Activated naive CD4-positive, alpha-beta T cell treated with anti-CD3 and anti-CD28 coated beads, Interleukin-2, amount 10 ng/mL, durations not matched to agents 7 days and 5 days (primary cell): ENCODE measurements at regions of chr10 and their contacts with region 1.

Region 1: GRCh38 chr10:11724938-11725776 is 17.0 kb upstream of the ECHDC3 start:
- DNase-seq: no peak
- H3K4me3 Mint-ChIP-seq: no peak overlapping the region
- H3K27ac Mint-ChIP-seq: no peak overlapping the region
- H3K4me1 Mint-ChIP-seq: peaks cover 4% of the 10 kb centered on the region
- H3K27me3 Mint-ChIP-seq: peaks cover 60% of the 10 kb centered on the region

Region 2: DNA sequence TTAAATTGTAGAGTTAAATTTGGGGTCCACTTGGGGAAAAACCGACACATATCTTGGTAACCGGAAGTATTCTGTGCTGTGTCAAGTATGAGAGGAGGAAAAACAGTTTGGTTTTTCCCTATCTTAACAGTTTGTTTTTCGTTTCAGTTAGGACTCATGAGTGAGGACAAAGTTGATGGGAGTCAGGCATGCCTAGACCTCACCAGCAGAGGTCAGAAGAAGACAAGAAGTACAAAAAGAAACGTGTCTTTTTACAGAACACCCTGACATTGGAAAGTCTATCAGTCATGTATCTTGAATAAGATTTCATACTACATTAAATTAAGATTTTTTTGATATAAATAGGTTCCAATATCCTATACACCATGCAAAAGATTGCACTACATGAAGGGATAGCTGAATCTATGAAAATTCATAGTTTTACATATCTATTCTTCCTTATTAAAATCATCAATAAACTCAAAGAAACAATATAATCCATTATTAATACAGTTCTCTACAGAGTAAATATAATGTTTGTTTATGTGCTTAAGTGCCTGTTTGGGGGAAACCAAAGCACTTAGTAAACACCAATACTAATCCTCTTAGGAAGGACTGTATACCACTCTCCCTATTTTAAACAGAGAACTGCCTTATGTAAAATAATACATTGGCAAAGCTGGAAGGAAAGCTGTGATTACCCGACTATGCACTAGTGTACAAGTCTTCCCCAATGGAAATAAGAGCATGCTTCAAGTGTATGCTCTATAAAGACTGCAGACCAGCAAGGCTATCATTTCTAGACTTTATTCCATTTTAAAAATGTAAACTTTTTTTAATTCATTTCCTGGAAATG is 209.3 kb before region 1 on chr10:
- CTCF ChIA-PET with region 1: interaction called, 36 read pairs
- DNase-seq: peak; percentile 65
- H3K4me3 Mint-ChIP-seq: no peak overlapping the region
- H3K27ac Mint-ChIP-seq: no peak overlapping the region
- H3K4me1 Mint-ChIP-seq: peaks cover 17% of the 10 kb centered on the region
- H3K27me3 Mint-ChIP-seq: no peaks in the 10 kb centered on the region

Region 3: DNA sequence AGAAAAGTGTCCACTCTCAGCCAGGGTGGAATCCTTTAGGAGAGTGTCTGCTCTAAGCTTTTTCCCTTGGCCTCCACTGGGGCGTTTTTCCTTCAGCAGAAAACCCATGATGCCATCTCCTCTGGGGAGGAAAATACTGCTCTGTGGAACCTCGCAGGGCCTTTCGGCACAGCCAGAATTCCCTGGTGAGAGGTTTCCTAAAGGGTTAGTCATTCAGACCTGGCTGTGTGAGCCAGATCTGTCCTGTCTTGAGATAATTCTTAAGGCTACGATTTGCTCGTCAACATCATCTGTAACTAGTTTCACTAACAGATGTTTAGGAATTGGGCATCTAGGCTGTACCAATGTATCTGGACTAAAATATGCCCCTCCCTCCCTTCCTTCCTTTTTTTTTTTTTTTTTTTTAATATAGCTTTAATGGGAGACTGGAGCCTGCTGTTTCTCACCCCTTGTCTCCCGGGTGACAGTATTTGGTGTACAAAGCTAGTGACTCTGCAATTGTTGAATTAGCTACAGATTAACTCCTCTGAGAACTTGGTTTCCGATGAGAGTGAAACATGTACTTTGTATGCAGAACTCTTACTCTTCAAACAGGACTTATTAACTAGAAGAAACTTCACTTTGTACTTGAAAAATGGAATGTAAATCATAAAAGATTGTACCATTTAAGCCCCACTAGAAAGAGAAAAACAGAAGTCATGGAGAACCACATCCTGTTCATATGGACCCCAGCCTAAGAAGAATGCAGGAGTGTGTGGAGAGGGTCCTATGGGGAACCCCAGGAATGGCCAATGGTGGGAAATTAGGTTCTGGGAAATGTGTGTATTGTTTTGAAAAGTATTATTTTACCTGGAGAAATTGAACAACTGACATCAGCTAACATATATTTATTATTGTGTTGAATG is 855.0 kb after region 1 on chr10:
- CTCF ChIA-PET with region 1: no interaction called
- DNase-seq: no peak
- H3K4me3 Mint-ChIP-seq: no peak overlapping the region
- H3K27ac Mint-ChIP-seq: no peak overlapping the region
- H3K4me1 Mint-ChIP-seq: peaks cover 6% of the 10 kb centered on the region
- H3K27me3 Mint-ChIP-seq: no peaks in the 10 kb centered on the region